Mammary epithelial cell (primary cell): ENCODE measurements at regions of chr14 and their contacts with region 1.

Region 1: GRCh38 chr14:95340201-95340697 is 20.5 kb upstream of the CLMN start:
- DNase-seq: no peak
- H3K4me3 ChIP-seq: no peak overlapping the region
- H3K27ac ChIP-seq: no peak overlapping the region
- H3K4me1 ChIP-seq: peaks cover 16% of the 10 kb centered on the region
- H3K27me3 ChIP-seq: no peaks in the 10 kb centered on the region
- CTCF ChIP-seq: no peak

Region 2: DNA sequence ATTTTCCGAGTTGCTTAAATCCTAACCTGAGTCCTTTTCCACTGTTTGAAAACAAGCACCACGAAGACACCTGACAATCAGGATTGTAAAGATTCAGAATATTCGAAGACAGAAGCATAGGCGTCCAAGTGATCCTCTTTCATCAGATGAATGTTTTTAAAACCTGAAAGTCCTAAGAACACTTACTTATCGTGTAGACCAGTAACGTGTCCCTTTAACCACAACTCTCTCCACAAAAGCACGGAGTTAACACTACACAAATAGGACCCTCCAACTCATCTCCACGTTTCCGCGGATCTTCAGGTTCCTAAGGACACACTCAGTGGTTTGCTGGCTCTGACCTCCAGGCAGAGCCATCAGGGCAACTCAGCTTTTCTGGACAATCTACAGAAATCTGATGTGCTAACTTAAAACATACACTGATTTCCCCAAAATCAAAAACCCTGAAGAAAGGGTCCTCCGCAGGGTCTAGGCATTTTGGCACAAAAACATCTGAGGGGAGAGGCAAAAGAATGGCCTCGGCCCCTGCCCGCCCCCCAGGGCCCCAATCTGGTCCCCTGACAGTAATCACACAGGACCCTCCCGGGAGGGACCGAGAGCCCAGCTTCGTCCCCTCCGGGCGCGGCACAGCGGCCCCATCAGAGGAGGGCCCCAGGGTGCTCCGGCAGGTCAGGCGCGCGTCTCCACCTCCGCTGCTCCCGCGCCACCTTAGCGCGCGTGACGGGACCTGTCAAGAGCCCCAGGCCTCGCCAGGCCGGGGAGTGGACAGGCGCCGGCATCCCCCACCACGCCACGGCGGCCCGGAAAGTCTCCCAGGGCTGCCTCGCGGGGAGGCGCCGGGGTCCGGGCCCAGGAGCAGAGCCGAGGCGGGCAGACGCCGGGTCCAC is 183.8 kb before region 1 on chr14:
- CTCF ChIA-PET with region 1: no interaction called
- dilution Hi-C with region 1: no loop called
- in situ Hi-C with region 1: no loop called
- intact Hi-C with region 1: no loop called
- DNase-seq: peak; percentile 36
- H3K4me3 ChIP-seq: peak overlapping the region; percentile 68 to 75 (median 75)
- H3K27ac ChIP-seq: peak overlapping the region; percentile 84
- H3K4me1 ChIP-seq: peaks cover 12% of the 10 kb centered on the region
- H3K27me3 ChIP-seq: no peaks in the 10 kb centered on the region
- CTCF ChIP-seq: no peak

Region 3: DNA sequence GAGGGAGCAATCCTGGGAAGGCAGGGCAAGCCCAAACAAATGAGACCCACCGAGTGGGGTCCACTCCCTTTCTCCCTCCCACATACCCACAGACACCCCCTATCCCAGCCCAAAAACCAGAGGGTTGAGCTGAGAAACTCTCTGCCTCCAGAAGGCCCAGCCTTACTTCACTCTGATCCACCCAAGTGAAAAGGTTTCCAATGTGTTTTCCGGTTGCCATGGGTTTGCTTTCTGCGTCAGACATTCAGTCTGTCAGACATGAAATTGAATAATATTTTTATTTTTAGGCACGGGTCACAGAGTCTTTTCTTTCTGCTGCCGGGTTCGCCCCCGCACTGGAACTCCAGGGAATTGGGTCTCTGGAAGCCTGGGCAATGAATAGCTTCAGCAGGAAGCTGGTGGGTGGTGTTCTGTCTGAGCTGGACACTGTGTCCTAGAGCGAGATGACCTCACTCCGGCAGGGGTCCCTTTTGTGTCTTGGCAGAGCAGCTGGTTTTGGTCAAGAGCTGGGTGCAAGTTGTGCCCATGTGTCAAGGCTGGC is 49.3 kb after region 1 on chr14:
- CTCF ChIA-PET with region 1: no interaction called
- dilution Hi-C with region 1: loop called (anchors 5 kb)
- in situ Hi-C with region 1: no loop called
- intact Hi-C with region 1: no loop called
- DNase-seq: peak; percentile 5
- H3K4me3 ChIP-seq: no peak overlapping the region
- H3K27ac ChIP-seq: no peak overlapping the region
- H3K4me1 ChIP-seq: no peaks in the 10 kb centered on the region
- H3K27me3 ChIP-seq: no peaks in the 10 kb centered on the region
- CTCF ChIP-seq: no peak

Region 4: DNA sequence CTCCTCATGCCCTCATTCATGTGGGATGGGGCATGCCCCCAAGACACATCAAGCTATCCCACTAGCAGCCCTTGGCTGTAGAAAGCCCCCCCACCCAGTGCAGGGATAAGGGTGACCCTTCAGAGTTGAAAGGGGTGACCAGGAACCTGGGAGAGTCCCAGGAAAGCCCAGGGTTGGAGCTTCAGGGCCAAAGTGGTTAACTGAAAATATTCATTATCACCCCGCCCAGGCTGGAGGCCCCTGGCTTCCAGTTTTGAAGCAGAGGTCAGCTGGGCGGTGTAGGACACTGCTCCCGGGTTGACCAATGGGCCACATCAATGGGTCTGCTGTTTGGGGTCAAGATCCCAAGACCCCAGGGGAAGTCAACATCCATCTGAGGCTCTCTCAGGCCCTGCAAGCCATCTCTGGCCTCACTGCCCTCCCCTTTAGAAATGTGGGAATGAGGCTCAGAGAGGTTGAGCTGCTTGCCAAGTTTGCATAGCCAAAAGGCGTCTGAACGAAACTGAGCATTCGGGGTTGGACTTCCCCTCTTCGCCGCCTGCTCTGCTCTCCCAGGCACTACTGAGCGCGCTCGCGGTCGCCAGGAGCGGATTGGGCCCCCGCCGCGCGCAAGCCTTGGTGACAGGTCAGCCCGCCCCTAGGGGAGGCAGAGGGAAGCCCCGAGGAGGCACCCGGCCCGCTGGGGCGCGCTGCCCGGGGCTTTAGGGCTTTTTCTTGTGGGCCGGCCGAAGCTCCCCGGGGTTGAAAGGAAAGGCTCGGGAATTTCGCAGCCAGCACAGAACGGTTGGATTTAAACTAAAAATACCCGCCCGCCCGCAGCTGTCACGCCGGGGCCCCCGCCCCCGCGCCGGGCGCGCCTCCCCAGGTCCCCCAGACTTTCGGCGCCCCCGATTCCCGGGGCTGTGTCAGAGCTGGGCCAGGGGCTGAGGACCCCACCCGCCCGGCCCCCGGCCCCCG is 175.6 kb after region 1 on chr14:
- CTCF ChIA-PET with region 1: no interaction called
- dilution Hi-C with region 1: no loop called
- in situ Hi-C with region 1: no loop called
- intact Hi-C with region 1: no loop called
- DNase-seq: peak; percentile 62
- H3K4me3 ChIP-seq: peak overlapping the region; percentile 53 to 58 (median 56)
- H3K27ac ChIP-seq: peak overlapping the region; percentile 28
- H3K4me1 ChIP-seq: peaks cover 45% of the 10 kb centered on the region
- H3K27me3 ChIP-seq: no peaks in the 10 kb centered on the region
- CTCF ChIP-seq: peak in 1 of 2 donors; percentile 30

Region 5: DNA sequence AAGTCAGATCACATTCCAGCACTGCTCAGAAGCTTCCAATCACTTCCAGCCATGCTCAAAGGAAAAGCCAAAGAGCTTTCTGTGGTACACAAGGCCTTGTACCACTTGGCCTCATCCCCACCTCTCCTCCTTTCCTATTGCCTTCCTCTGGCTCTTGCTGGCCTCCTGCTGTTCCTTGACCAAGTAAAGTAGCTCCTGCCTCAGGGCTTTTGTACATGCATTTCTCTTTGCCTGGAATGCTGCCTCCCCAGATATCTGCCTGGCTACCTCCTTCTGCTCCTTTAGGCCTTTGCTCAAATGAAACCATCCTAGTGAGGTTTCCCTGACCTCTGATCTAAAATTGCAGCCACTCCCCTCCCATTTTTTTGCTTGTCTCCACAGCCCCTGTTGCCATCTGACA is 294.8 kb after region 1 on chr14:
- CTCF ChIA-PET with region 1: no interaction called
- dilution Hi-C with region 1: no loop called
- in situ Hi-C with region 1: no loop called
- intact Hi-C with region 1: no loop called
- DNase-seq: no peak
- H3K4me3 ChIP-seq: no peak overlapping the region
- H3K27ac ChIP-seq: no peak overlapping the region
- H3K4me1 ChIP-seq: no peaks in the 10 kb centered on the region
- H3K27me3 ChIP-seq: no peaks in the 10 kb centered on the region
- CTCF ChIP-seq: no peak